Endothelial cell of umbilical vein (primary cell): ENCODE measurements at regions of chr19 and their contacts with region 1.

Region 1: GRCh38 chr19:47157431-47158321 is 27.0 kb downstream of the SAE1 start:
- DNase-seq: peak; percentile 90
- H3K4me3 ChIP-seq: no peak overlapping the region
- H3K27ac ChIP-seq: peak overlapping the region; percentile 95
- H3K4me1 ChIP-seq: peaks cover 33% of the 10 kb centered on the region
- H3K27me3 ChIP-seq: no peaks in the 10 kb centered on the region
- CTCF ChIP-seq: peak in 1 of 2 donors; percentile 11
- POLR2A ChIP-seq: no peak

Region 2: GRCh38 chr19:47130591-47131227 is 27.0 kb before region 1 on chr19 and contains the start of gene SAE1:
- CTCF ChIA-PET with region 1: interaction called, 3 read pairs
- POLR2A ChIA-PET with region 1: no interaction called
- dilution Hi-C with region 1: no loop called
- intact Hi-C with region 1: loop called (anchors 2 kb)
- DNase-seq: peak; percentile 99
- H3K4me3 ChIP-seq: peak within 1 kb of the TSS; percentile 76 to 93 (median 82)
- H3K27ac ChIP-seq: peak within 1 kb of the TSS; percentile 78
- H3K4me1 ChIP-seq: peaks cover 30% of the 10 kb centered on the region
- H3K27me3 ChIP-seq: no peaks in the 10 kb centered on the region
- CTCF ChIP-seq: peak; percentile 39 to 64
- POLR2A ChIP-seq: peak; percentile 75
- total RNA-seq, gene SAE1: 219 and 223 TPM in 2 replicates

Region 3: DNA sequence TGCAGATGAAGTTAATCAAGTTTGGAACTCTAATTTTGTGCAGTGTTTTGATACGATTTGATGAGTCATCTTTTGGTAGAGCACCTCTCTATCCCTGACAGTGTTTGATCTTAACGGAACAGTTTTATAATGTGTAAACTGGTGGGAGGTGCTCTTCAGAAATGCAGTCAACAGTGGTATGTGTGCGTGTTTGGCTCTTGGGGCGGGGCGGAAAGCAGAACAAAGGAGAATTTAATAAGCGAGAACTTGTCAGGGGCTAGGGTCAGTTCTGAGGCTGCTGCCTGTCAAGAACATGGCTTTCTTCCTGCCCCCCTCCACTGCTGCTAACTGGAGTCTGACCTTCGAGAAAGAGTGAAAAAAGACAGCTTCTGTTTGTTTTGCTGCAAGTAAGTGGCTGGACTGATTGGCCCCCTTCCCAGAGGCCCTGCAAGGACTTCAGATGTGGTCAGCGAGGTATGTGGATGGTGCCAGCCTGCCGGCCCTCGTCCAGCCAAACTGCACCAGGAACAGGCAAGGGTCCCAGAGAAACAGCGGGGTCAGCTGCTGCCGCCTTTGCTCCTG is 32.6 kb after region 1 on chr19:
- CTCF ChIA-PET with region 1: interaction called, 3 read pairs
- POLR2A ChIA-PET with region 1: no interaction called
- dilution Hi-C with region 1: no loop called
- intact Hi-C with region 1: loop called (anchors 5 kb)
- DNase-seq: peak; percentile 97
- H3K4me3 ChIP-seq: peak overlapping the region in 1 of 3 experiments; percentile 20
- H3K27ac ChIP-seq: peak overlapping the region; percentile 96
- H3K4me1 ChIP-seq: peaks cover 24% of the 10 kb centered on the region
- H3K27me3 ChIP-seq: no peaks in the 10 kb centered on the region
- CTCF ChIP-seq: no peak
- POLR2A ChIP-seq: no peak